ENCODE measurements at regions of chr5 and their contacts with region 1.

Region 1: DNA sequence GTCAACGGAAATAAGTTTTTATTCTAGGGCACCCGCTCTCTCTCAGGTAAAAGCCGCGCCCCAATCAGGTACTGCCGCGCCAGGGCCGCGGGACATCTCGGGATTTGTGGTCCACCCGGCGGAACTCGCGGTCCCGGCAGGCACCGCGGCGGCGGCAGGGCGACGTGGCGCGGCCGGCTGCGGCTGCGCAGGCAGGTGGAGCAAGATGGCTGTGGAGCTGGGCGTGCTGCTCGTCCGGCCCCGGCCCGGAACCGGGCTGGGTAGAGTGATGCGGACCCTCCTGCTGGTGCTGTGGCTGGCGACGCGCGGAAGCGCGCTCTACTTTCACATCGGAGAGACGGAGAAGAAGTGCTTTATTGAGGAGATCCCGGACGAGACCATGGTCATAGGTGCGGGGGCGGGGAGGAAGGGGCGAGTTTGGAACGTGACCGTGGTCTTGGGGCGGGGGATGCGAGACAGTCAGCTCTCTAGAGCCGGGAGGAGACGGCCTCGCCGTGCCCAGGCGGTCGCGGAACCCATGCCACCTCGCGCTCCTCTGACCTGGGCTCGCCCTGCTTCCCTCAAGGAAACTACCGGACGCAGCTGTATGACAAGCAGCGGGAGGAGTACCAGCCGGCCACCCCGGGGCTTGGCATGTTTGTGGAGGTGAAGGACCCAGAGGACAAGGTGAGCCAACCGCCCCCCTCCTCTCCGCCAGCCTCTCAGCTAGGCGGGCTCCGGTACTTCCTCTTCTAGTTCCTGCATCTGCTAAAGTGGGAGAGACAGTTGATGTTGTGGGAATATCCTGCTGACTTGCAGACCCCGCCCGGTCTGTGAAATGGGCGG is at the start of gene TMED9:
- DNase-seq: peak; percentile 73 to 94 (median 84)
- H3K4me3 ChIP-seq: peak within 1 kb of the TSS; percentile 50 to 98 (median 92)
- H3K27ac ChIP-seq: peak within 1 kb of the TSS in 53 of 59 donors; percentile 11 to 90 (median 62)
- H3K27me3 ChIP-seq: peaks cover 0 to 6% (median 0%) of the 10 kb centered on the region in 45 donors
- CTCF ChIP-seq: peak in 46 of 56 donors; percentile 11 to 58 (median 41)
- total RNA-seq, gene TMED9: 47.5 to 89.0 (median 63.8) TPM

Region 2: DNA sequence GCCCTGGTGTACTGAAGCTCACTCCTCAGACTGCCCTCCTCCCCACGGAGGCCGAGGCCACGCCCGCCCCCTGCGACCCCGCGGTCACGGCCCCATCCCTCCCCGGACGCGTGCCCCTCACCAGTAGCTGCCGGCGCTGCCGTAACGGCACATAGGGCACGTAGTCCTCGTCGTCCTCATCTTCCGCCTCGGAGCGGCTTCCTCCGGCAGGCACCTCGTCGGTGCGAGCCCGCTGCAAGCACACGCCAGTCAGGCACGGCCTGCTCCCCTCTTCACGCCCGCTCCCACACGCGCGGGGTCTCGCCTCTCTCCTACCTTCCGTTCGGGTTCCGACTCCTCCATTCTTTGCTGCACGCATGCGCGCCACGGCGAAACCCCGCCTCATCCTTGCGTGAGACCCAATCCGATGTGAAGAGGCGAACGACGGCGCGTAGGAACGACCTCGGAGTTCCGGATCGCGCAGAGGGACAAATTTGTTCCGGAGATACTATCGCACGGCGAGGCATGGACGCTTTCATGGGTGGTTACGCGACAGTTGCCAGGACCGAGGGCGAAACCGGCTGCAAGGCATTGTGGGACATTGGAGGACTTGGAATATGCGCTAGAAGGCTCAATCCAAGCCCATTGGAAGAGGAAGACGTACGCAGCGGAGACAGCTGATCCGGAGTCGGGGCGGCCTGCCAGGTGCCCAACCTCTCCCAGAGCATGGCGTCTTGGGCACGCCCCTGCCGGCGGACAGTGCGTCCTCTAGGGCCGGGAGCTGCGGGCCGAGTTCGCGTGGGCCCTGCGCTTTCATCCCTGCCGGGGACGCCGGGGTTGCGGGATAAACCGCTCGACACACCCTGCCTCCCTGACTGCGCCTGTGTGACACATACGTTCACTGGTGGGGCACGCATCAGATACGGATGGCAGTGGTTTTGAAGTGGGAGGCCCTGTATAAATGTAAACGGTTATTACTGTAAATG is 75.3 kb before region 1 on chr5 and contains the start of gene DDX41:
- intact Hi-C with region 1: loop called (anchors 5 kb)
- DNase-seq: peak; percentile 95 to 98 (median 97)
- H3K4me3 ChIP-seq: peak within 1 kb of the TSS; percentile 60 to 100 (median 93)
- H3K27ac ChIP-seq: peak within 1 kb of the TSS; percentile 4 to 95 (median 87)
- H3K27me3 ChIP-seq: no peaks in the 10 kb centered on the region
- CTCF ChIP-seq: peak in 40 of 56 donors; percentile 10 to 58 (median 36)
- total RNA-seq, gene DDX41: 59.7 to 128 (median 92.7) TPM